Panc1 (cell line): ENCODE measurements at regions of chrX and their contacts with region 1.

Region 1: DNA sequence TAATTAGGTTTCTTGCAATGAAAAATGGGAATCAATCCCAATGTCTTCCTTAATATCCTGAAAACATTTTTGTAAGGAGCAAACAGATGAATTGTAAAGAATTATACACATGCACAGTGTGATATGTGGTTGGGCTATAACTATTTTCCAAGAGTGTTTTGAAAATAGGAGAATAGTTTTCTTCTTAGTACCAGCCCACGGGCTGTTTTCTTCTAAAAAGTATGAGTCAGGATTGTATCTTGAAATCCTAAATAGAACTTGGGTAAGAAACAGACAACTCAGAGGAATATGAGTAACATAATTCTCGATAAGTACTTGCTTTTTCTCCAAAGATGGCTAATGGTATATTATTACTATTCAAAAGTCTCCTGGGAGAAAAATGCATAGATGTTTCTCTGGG is 136.7 kb downstream of the MAGEC2 start:
- DNase-seq: no peak
- ATAC-seq: no peak
- H3K4me3 ChIP-seq: no peak overlapping the region
- H3K27ac ChIP-seq: no peak overlapping the region
- H3K4me1 ChIP-seq: no peaks in the 10 kb centered on the region
- H3K27me3 ChIP-seq: no peaks in the 10 kb centered on the region
- CTCF ChIP-seq: no peak

Region 2: DNA sequence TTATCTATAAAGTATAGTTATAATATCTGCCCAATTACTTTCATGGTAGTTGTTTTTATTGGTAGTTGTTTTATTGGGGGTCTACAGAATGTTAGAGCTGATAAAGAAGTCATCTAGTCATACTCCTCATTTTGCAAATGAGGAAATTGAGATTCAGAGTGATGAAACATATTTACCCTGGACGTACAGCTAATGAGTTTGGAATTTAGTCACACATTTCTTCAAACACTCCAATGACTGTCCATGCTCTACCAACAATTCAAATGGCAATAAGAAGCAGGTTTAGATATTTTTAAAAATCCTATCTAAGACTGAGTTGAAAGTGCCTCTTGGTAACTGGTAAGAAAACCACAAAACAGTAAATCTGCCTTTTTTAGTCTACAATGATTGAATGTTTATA is 66.4 kb before region 1 on chrX:
- CTCF ChIA-PET with region 1: no interaction called
- POLR2A ChIA-PET with region 1: no interaction called
- in situ Hi-C with region 1: no loop called
- intact Hi-C with region 1: loop called (anchors 10 kb)
- DNase-seq: no peak
- ATAC-seq: no peak
- H3K4me3 ChIP-seq: no peak overlapping the region
- H3K27ac ChIP-seq: no peak overlapping the region
- H3K4me1 ChIP-seq: no peaks in the 10 kb centered on the region
- H3K27me3 ChIP-seq: no peaks in the 10 kb centered on the region
- CTCF ChIP-seq: no peak